ENCODE measurements at regions of chr2 and their contacts with region 1.

Region 1: DNA sequence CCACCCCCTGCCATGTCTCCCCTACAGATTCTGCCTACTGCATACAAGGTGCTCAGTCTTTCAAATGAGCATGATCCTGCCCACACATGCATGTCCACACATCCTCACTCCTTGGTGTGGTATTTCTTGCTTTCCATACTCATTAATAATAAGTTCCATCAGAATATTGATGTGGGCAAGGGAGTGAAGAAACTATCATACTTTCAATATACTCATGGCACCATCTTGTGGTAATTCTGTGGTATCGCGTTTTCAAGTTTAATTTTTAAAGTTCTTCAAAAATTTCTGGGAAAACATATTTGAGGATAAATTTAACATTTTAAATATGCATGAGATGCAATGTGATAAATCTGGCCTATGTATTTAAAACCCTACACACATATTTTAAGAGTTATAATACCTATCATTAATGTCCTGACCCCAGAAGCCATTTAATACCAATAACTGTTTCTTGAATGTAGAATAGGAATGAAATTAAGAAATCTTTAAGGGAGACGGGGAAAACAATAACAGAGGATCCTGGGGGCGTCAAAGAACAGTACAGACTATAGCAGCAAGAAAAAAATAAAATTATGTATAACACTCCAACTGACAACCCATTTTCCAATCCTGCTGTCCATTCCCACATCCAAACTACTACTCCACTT is 110.1 kb downstream of the ZNF385B start:
- DNase-seq: peak; percentile 31
- ATAC-seq: no peak
- H3K4me3 ChIP-seq: no peak overlapping the region
- H3K4me3 Mint-ChIP-seq: no peak overlapping the region
- H3K27ac ChIP-seq: no peak overlapping the region
- H3K27ac Mint-ChIP-seq: no peak overlapping the region
- H3K4me1 ChIP-seq: no peaks in the 10 kb centered on the region
- H3K4me1 Mint-ChIP-seq: no peaks in the 10 kb centered on the region
- H3K27me3 ChIP-seq: peaks cover 0 to 2% (median 0%) of the 10 kb centered on the region in 4 experiments
- H3K27me3 Mint-ChIP-seq: peaks cover 6% of the 10 kb centered on the region
- CTCF ChIP-seq: peak; percentile 76

Region 2: GRCh38 chr2:178397002-178397605 is 1354.2 kb before region 1 on chr2:
- CTCF ChIA-PET with region 1: no interaction called
- POLR2A ChIA-PET with region 1: no interaction called
- intact Hi-C with region 1: loop called (anchors 2 kb)
- DNase-seq: peak; percentile 60
- ATAC-seq: peak; percentile 49
- H3K4me3 ChIP-seq: no peak overlapping the region
- H3K4me3 Mint-ChIP-seq: no peak overlapping the region
- H3K27ac ChIP-seq: no peak overlapping the region
- H3K27ac Mint-ChIP-seq: no peak overlapping the region
- H3K4me1 ChIP-seq: no peaks in the 10 kb centered on the region
- H3K4me1 Mint-ChIP-seq: no peaks in the 10 kb centered on the region
- H3K27me3 ChIP-seq: no peaks in the 10 kb centered on the region
- H3K27me3 Mint-ChIP-seq: no peaks in the 10 kb centered on the region
- CTCF ChIP-seq: peak; percentile 87

Measured in B cell (primary cell).